ENCODE measurements at regions of chr2 and their contacts with region 1.

Region 1: DNA sequence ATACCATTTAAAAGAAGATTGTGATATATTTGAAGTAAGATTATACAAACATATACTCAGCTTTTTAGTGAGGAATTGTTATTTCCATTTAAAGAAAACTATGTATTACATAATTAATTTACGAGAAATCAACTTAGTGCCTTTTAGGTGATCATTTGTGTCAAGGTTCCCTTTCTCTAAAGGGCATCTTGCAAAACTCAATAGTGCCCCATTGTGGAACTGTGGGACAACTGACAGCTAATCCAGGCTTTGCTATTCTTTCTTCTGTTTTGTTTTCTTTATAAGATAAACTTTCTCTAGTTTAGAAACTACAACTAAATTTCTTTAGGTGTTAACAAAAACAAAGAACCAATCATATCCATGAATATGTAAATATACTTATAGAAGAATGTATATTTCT is 24.3 kb upstream of the VIT start:
- DNase-seq: peak; percentile 60
- H3K4me3 ChIP-seq: no peak overlapping the region
- H3K27ac ChIP-seq: no peak overlapping the region
- H3K4me1 ChIP-seq: peaks cover 14% of the 10 kb centered on the region
- H3K27me3 ChIP-seq: no peaks in the 10 kb centered on the region
- CTCF ChIP-seq: peak; percentile 58
- POLR2A ChIP-seq: no peak

Region 2: DNA sequence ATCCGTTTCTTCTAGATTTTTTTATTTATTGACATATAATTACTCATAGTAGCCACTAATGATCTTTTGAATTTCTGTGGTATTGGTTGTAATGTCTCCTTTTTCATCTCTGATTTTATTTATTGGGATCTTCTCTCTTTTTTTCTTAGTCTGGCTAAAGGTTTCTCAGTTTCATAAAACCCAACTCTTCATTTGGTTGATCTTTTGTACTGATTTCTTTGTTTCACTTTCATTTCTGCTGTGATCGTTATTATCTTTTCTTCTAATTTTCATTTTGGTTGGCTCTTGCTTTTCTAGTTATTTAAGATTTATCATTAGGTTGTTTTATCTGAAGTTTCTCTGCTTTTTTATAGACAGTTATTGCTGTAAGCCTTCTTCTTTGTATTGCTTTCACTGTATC is 780.3 kb before region 1 on chr2:
- CTCF ChIA-PET with region 1: no interaction called
- POLR2A ChIA-PET with region 1: no interaction called
- dilution Hi-C with region 1: no loop called
- intact Hi-C with region 1: loop called (anchors 10 kb)
- DNase-seq: no peak
- H3K4me3 ChIP-seq: no peak overlapping the region
- H3K27ac ChIP-seq: no peak overlapping the region
- H3K4me1 ChIP-seq: no peaks in the 10 kb centered on the region
- H3K27me3 ChIP-seq: no peaks in the 10 kb centered on the region
- CTCF ChIP-seq: no peak
- POLR2A ChIP-seq: no peak

Region 3: DNA sequence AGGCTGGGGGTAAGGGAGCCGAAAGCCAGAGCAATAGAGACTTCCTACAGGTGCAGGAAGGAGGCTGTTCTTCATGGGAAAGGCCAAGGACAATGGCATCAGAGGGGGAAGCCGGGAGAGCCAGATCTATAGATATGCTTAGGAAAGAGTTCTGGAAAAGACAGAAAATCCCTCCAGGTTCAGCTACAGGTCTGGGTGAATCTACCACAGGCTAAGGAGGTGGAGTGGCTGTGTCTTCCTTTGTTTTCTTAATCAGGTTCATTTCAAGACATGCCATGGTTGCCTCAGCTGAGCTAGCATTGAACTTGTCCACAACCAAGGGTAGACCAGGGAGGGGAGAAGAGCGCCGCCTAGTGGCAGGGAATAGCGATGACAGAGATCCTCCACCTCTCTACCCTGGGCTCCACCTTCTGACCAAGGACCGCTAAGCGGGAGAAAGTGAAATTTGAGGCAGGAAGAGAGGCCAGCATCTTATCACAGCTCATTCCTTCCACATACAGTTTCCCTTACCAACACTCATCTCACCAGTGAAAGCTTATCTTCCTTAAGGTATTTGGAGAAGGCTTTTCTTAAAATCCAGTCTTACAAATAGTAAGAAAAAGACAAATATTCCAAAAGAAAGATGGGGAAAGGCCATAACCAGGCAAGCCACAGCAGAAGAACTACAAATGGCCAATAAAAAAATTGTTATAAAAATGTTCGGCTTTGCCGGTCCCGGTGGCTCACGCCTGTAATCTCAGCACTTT is 98.5 kb after region 1 on chr2:
- CTCF ChIA-PET with region 1: interaction called, 3 read pairs
- POLR2A ChIA-PET with region 1: no interaction called
- dilution Hi-C with region 1: no loop called
- intact Hi-C with region 1: loop called (anchors 2 kb)
- DNase-seq: peak; percentile 49
- H3K4me3 ChIP-seq: no peak overlapping the region
- H3K27ac ChIP-seq: no peak overlapping the region
- H3K4me1 ChIP-seq: no peaks in the 10 kb centered on the region
- H3K27me3 ChIP-seq: peaks cover 1 to 6% of the 10 kb centered on the region in 2 experiments
- CTCF ChIP-seq: peak; percentile 79
- POLR2A ChIP-seq: no peak

Measured in endothelial cell of umbilical vein (primary cell).